Dendritic cell treated with granulocyte-macrophage colony-stimulating factor and Interleukin-4, amounts not matched to agents 40 ng/mL and 50 ng/mL, for 4 days (primary cell): ENCODE measurements at regions of chr12 and their contacts with region 1.

Region 1: GRCh38 chr12:118307069-118307954 is 65.4 kb downstream of the TAOK3 start:
- H3K4me3 Mint-ChIP-seq: peak overlapping the region; percentile 56
- H3K27ac Mint-ChIP-seq: peak overlapping the region; percentile 85
- H3K4me1 Mint-ChIP-seq: peaks cover 38% of the 10 kb centered on the region
- H3K27me3 Mint-ChIP-seq: no peaks in the 10 kb centered on the region

Region 2: DNA sequence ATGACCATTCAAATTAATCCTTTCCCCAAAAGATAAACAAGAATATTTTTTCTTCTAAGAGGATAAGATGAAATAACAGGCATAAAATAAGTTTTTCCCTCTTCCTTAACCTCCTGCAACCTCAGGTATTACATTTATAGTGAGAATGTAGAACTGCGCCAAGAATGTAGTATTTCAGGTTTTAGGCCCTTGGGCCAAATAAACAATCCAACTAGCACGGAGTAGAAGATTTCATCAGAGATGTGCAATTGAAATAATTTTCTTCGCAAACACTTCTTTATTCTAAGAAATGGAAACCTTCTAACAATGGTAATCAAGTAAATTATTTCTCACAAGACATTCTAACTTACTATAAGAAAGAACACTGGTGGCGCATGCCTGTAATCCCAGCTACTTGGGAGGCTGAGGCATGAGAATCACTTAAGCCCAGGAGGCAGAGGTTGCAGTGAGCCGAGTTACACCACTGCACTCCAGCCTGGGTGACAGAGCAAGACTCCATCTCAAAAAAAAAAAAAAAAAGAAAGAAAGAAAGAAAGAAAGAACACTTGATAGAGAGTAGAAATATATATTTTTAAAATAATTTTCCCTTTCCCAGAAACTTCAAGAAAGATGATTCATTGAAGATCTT is 35.4 kb before region 1 on chr12:
- intact Hi-C with region 1: loop called (anchors 5 kb)
- H3K4me3 Mint-ChIP-seq: no peak overlapping the region
- H3K27ac Mint-ChIP-seq: no peak overlapping the region
- H3K4me1 Mint-ChIP-seq: peaks cover 25% of the 10 kb centered on the region
- H3K27me3 Mint-ChIP-seq: no peaks in the 10 kb centered on the region

Region 3: DNA sequence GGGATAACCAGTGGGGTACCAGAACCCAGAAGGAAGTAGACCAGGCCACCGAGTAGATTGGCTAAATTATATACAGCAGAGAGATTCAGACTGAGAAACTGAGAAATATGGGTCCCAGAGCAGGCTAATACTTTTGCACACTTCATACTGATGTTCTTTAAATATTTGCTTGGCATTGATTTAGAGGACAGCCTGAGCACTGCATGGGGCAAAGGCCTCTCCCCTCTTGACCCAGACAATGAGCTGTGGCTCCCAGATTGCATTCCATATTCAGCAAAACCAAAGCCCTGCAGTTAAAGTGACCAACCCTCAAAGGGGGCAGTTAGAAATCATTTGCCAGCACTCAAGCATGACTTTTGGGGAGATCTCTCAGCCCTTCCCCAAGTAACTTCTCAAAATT is 348.3 kb after region 1 on chr12:
- intact Hi-C with region 1: no loop called
- H3K4me3 Mint-ChIP-seq: no peak overlapping the region
- H3K27ac Mint-ChIP-seq: no peak overlapping the region
- H3K4me1 Mint-ChIP-seq: no peaks in the 10 kb centered on the region
- H3K27me3 Mint-ChIP-seq: no peaks in the 10 kb centered on the region